ENCODE measurements at regions of chr4 and their contacts with region 1.

Region 1: GRCh38 chr4:55278316-55278715 is 67.7 kb upstream of the SRD5A3 start:
- DNase-seq: no peak
- H3K4me3 ChIP-seq: no peak overlapping the region
- H3K27ac ChIP-seq: no peak overlapping the region
- H3K4me1 ChIP-seq: no peaks in the 10 kb centered on the region
- H3K27me3 ChIP-seq: no peaks in the 10 kb centered on the region
- CTCF ChIP-seq: no peak
- POLR2A ChIP-seq: no peak

Region 2: DNA sequence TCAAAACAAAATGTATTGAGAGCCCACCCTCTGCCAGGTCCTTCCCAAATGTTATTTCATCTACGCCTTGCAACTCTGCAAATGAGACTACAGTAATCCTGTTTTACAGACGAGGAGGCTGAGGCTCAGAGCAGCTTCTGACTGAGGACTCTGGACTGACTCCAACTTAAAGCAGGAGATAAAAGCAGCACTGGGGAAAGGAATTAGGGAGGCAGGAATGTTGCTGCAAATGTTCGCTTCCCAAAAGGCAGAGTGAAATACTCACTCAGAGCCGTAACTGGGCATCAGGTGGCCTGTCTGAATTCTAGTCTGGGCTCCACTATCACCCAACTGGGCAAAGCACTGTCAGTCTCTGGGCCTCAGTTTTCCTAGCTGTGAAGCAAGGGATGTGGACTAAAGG is 27.0 kb before region 1 on chr4:
- intact Hi-C with region 1: loop called (anchors 2 kb)
- DNase-seq: no peak
- H3K4me3 ChIP-seq: no peak overlapping the region
- H3K27ac ChIP-seq: no peak overlapping the region
- H3K4me1 ChIP-seq: no peaks in the 10 kb centered on the region
- H3K27me3 ChIP-seq: no peaks in the 10 kb centered on the region
- CTCF ChIP-seq: no peak
- POLR2A ChIP-seq: no peak